T-cell (primary cell): ENCODE measurements at regions of chr13 and their contacts with region 1.

Region 1: GRCh38 chr13:105083992-105084391 is 1451.5 kb downstream of the EFNB2 start:
- DNase-seq: no peak
- ATAC-seq: no peak
- H3K4me3 ChIP-seq: no peak overlapping the region
- H3K4me3 Mint-ChIP-seq: no peak overlapping the region
- H3K27ac ChIP-seq: no peak overlapping the region
- H3K27ac Mint-ChIP-seq: no peak overlapping the region
- H3K4me1 ChIP-seq: no peaks in the 10 kb centered on the region
- H3K4me1 Mint-ChIP-seq: no peaks in the 10 kb centered on the region
- H3K27me3 ChIP-seq: no peaks in the 10 kb centered on the region
- H3K27me3 Mint-ChIP-seq: no peaks in the 10 kb centered on the region

Region 2: GRCh38 chr13:104422668-104423067 is 661.3 kb before region 1 on chr13:
- CTCF ChIA-PET with region 1: interaction called in 1 of 2 experiments, 10 read pairs
- POLR2A ChIA-PET with region 1: no interaction called
- DNase-seq: no peak
- ATAC-seq: no peak
- H3K4me3 ChIP-seq: no peak overlapping the region
- H3K4me3 Mint-ChIP-seq: no peak overlapping the region
- H3K27ac ChIP-seq: no peak overlapping the region
- H3K27ac Mint-ChIP-seq: no peak overlapping the region
- H3K4me1 ChIP-seq: no peaks in the 10 kb centered on the region
- H3K4me1 Mint-ChIP-seq: no peaks in the 10 kb centered on the region
- H3K27me3 ChIP-seq: no peaks in the 10 kb centered on the region
- H3K27me3 Mint-ChIP-seq: no peaks in the 10 kb centered on the region

Region 3: DNA sequence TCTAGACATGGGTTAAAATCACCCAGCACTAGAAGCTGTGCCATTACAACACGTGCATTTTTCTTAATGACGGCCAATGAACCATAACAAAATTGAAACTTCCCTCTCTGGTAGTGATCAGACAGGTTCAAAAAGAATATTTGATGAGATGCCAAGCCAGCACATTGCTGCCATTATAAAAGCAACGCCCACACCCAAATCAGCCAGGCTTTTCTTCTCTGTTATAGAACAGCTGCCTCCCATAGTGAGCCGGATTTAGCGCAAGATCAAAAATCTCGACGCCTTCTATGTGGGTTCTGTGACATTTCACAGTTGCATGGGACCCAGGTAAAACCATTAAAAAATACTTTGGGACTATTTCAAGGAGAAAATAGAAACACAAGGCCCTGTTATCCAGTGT is 293.5 kb after region 1 on chr13:
- CTCF ChIA-PET with region 1: no interaction called
- POLR2A ChIA-PET with region 1: no interaction called
- DNase-seq: no peak
- ATAC-seq: no peak
- H3K4me3 ChIP-seq: no peak overlapping the region
- H3K4me3 Mint-ChIP-seq: no peak overlapping the region
- H3K27ac ChIP-seq: no peak overlapping the region
- H3K27ac Mint-ChIP-seq: no peak overlapping the region
- H3K4me1 ChIP-seq: no peaks in the 10 kb centered on the region
- H3K4me1 Mint-ChIP-seq: no peaks in the 10 kb centered on the region
- H3K27me3 ChIP-seq: no peaks in the 10 kb centered on the region
- H3K27me3 Mint-ChIP-seq: peaks cover 0 to 4% of the 10 kb centered on the region in 2 donors